ENCODE measurements at regions of chr6 and their contacts with region 1.

Region 1: GRCh38 chr6:169751242-169752073 is at the starts of genes DYNLT2 and ERMARD:
- DNase-seq: peak; percentile 93
- H3K4me3 Mint-ChIP-seq: peak within 1 kb of the TSS; percentile 97
- H3K27ac Mint-ChIP-seq: peak within 1 kb of the TSS; percentile 99
- H3K4me1 Mint-ChIP-seq: peaks cover 22% of the 10 kb centered on the region
- H3K27me3 Mint-ChIP-seq: peaks cover 2% of the 10 kb centered on the region
- total RNA-seq, gene DYNLT2: 1.9 and 2.1 TPM in 2 replicates
- total RNA-seq, gene ERMARD: 24.5 and 25.9 TPM in 2 replicates

Region 2: GRCh38 chr6:169212897-169213813 is 538.3 kb before region 1 on chr6:
- intact Hi-C with region 1: loop called (anchors 10 kb)
- DNase-seq: peak; percentile 87
- H3K4me3 Mint-ChIP-seq: peak overlapping the region; percentile 58
- H3K27ac Mint-ChIP-seq: peak overlapping the region; percentile 52
- H3K4me1 Mint-ChIP-seq: peaks cover 17% of the 10 kb centered on the region
- H3K27me3 Mint-ChIP-seq: peaks cover 3% of the 10 kb centered on the region

Region 3: GRCh38 chr6:169723200-169723909 is 28.1 kb before region 1 on chr6:
- intact Hi-C with region 1: loop called (anchors 1 kb)
- DNase-seq: peak; percentile 59
- H3K4me3 Mint-ChIP-seq: peak overlapping the region; percentile 97
- H3K27ac Mint-ChIP-seq: peak overlapping the region; percentile 97
- H3K4me1 Mint-ChIP-seq: peaks cover 38% of the 10 kb centered on the region
- H3K27me3 Mint-ChIP-seq: peaks cover 2% of the 10 kb centered on the region

Region 4: GRCh38 chr6:170306324-170307079 is 555.0 kb after region 1 on chr6 and contains the start of gene FAM120B:
- intact Hi-C with region 1: loop called (anchors 2 kb)
- DNase-seq: peak; percentile 96
- H3K4me3 Mint-ChIP-seq: peak within 1 kb of the TSS; percentile 95
- H3K27ac Mint-ChIP-seq: peak within 1 kb of the TSS; percentile 91
- H3K4me1 Mint-ChIP-seq: peaks cover 23% of the 10 kb centered on the region
- H3K27me3 Mint-ChIP-seq: peaks cover 25% of the 10 kb centered on the region
- total RNA-seq, gene FAM120B: 19.6 and 21.8 TPM in 2 replicates

Region 5: GRCh38 chr6:170584181-170584953 is 832.9 kb after region 1 on chr6 and contains the start of gene PDCD2:
- intact Hi-C with region 1: loop called (anchors 1 kb)
- DNase-seq: peak; percentile 89
- H3K4me3 Mint-ChIP-seq: peak within 1 kb of the TSS; percentile 99
- H3K27ac Mint-ChIP-seq: peak within 1 kb of the TSS; percentile 90
- H3K4me1 Mint-ChIP-seq: peaks cover 28% of the 10 kb centered on the region
- H3K27me3 Mint-ChIP-seq: peaks cover 3% of the 10 kb centered on the region
- total RNA-seq, gene PDCD2: 117 and 124 TPM in 2 replicates

Measured in activated T-helper 2 cell treated with anti-CD3 and anti-CD28 coated beads, Interferon-gamma antibody, Interleukin-2, Interleukin-4, amounts not matched to agents 10 μg/mL and 5 μg/mL and 100 μg/mL, durations not matched to agents 14 hours and 24 hours and 36 hours (primary cell).